Dendritic cell treated with granulocyte-macrophage colony-stimulating factor and Interleukin-4, amounts not matched to agents 40 ng/mL and 50 ng/mL, for 4 days (primary cell): ENCODE measurements at regions of chr11 and their contacts with region 1.

Region 1: GRCh38 chr11:85595285-85595884 is 31.8 kb downstream of the DLG2 start:
- H3K4me3 Mint-ChIP-seq: no peak overlapping the region
- H3K27ac Mint-ChIP-seq: no peak overlapping the region
- H3K4me1 Mint-ChIP-seq: peaks cover 5% of the 10 kb centered on the region
- H3K27me3 Mint-ChIP-seq: peaks cover 2% of the 10 kb centered on the region

Region 2: GRCh38 chr11:84384731-84385130 is 1210.7 kb before region 1 on chr11:
- intact Hi-C with region 1: loop called (anchors 2 kb)
- H3K4me3 Mint-ChIP-seq: no peak overlapping the region
- H3K27ac Mint-ChIP-seq: no peak overlapping the region
- H3K4me1 Mint-ChIP-seq: no peaks in the 10 kb centered on the region
- H3K27me3 Mint-ChIP-seq: no peaks in the 10 kb centered on the region

Region 3: DNA sequence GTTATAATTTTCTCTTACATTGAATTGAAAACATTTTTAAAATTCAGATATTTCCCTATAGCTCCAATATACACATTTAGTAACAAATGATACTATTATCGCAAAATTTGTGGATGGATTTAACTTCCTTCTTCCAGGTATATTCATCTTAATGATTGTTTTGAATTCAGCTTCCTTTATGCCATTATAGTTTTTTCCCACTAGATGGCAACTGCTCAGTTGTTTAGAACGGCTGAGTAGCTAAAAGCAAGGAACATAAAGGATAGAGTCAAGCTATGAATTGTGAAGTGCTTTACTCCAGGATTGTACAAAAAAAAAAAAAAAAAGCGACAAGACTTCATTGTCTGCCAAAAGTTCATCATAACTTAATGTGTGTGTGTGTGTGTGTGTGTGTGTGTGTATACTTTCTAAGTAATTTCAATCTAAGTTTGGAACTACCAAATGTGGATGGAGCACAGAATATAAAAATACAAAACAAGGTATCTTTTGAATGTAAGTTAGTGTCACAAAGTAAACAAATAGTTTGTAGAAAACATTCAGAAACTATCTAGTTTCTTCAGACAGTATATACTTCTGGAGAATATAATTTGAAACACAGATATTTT is 814.6 kb before region 1 on chr11:
- intact Hi-C with region 1: loop called (anchors 10 kb)
- H3K4me3 Mint-ChIP-seq: no peak overlapping the region
- H3K27ac Mint-ChIP-seq: no peak overlapping the region
- H3K4me1 Mint-ChIP-seq: no peaks in the 10 kb centered on the region
- H3K27me3 Mint-ChIP-seq: no peaks in the 10 kb centered on the region

Region 4: DNA sequence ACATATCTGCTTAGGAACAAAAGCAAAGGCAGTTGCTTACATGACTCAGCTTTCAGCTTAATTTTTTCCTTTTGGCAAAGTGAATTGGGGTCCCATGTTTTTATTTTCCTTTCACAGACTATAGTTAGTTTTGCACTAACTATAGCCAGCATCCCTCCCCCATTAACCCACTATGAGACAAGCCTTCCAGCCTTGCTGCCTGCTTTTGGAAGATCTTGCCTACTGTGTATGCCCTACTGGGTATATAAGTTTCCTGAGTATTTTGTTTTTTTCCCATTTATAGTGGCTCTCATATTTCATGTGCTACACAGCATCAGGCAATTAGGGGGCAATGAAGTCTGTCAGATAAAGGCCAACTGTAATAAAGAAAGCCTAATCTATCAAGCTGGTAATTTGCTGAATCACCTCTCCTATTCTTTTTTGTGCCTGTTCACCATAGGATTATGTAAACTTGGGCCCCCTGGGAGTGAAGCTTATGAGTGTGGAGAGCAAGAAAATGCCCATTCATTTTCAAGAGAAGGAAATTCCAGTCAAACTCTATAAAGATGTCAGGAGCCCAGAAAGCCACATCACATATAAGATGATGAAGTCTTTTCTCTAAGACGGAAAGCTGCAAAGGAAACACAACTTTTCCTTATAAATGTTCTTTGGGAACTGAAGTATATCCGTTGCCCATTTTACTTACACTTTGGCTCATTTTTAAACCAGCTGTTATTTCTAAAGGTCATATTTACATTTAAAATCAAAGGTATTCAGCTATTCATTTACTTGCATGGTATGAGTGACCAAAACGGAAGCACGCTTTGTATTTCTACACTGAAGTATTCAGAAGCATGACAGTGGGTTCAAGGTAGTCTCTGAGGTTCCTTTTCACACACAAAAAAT is 323.8 kb after region 1 on chr11:
- intact Hi-C with region 1: no loop called
- H3K4me3 Mint-ChIP-seq: no peak overlapping the region
- H3K27ac Mint-ChIP-seq: no peak overlapping the region
- H3K4me1 Mint-ChIP-seq: peaks cover 6% of the 10 kb centered on the region
- H3K27me3 Mint-ChIP-seq: peaks cover 6% of the 10 kb centered on the region